ENCODE measurements at regions of chr2 and their contacts with region 1.

Region 1: GRCh38 chr2:46010925-46011490 is 286.2 kb upstream of the EPAS1 start:
- DNase-seq: no peak
- H3K4me3 ChIP-seq: no peak overlapping the region
- H3K27me3 ChIP-seq: no peaks in the 10 kb centered on the region
- CTCF ChIP-seq: peak; percentile 59

Region 2: GRCh38 chr2:46048693-46049092 is 37.7 kb after region 1 on chr2:
- CTCF ChIA-PET with region 1: no interaction called
- POLR2A ChIA-PET with region 1: no interaction called
- DNase-seq: no peak
- H3K4me3 ChIP-seq: no peak overlapping the region
- H3K27me3 ChIP-seq: no peaks in the 10 kb centered on the region
- CTCF ChIP-seq: no peak

Region 3: GRCh38 chr2:46461011-46461674 is 450.1 kb after region 1 on chr2:
- CTCF ChIA-PET with region 1: interaction called, 10 read pairs
- POLR2A ChIA-PET with region 1: no interaction called
- DNase-seq: no peak
- H3K4me3 ChIP-seq: no peak overlapping the region
- H3K27me3 ChIP-seq: no peaks in the 10 kb centered on the region
- CTCF ChIP-seq: peak; percentile 98